ENCODE measurements at regions of chr19 and their contacts with region 1.

Region 1: GRCh38 chr19:11587302-11587974 is 9.8 kb upstream of the ZNF627 start:
- DNase-seq: peak; percentile 74 to 81
- ATAC-seq: peak; percentile 85 to 92 (median 90)
- H3K4me3 ChIP-seq: no peak overlapping the region
- H3K27ac ChIP-seq: no peak overlapping the region
- H3K4me1 ChIP-seq: no peaks in the 10 kb centered on the region
- H3K27me3 ChIP-seq: no peaks in the 10 kb centered on the region
- CTCF ChIP-seq: peak; percentile 88

Region 2: GRCh38 chr19:11125994-11126685 is 461.3 kb before region 1 on chr19:
- intact Hi-C with region 1: no loop called
- DNase-seq: peak; percentile 78 to 85
- ATAC-seq: peak; percentile 59 to 85 (median 68)
- H3K4me3 ChIP-seq: no peak overlapping the region
- H3K27ac ChIP-seq: no peak overlapping the region
- H3K4me1 ChIP-seq: no peaks in the 10 kb centered on the region
- H3K27me3 ChIP-seq: no peaks in the 10 kb centered on the region
- CTCF ChIP-seq: peak; percentile 67

Region 3: DNA sequence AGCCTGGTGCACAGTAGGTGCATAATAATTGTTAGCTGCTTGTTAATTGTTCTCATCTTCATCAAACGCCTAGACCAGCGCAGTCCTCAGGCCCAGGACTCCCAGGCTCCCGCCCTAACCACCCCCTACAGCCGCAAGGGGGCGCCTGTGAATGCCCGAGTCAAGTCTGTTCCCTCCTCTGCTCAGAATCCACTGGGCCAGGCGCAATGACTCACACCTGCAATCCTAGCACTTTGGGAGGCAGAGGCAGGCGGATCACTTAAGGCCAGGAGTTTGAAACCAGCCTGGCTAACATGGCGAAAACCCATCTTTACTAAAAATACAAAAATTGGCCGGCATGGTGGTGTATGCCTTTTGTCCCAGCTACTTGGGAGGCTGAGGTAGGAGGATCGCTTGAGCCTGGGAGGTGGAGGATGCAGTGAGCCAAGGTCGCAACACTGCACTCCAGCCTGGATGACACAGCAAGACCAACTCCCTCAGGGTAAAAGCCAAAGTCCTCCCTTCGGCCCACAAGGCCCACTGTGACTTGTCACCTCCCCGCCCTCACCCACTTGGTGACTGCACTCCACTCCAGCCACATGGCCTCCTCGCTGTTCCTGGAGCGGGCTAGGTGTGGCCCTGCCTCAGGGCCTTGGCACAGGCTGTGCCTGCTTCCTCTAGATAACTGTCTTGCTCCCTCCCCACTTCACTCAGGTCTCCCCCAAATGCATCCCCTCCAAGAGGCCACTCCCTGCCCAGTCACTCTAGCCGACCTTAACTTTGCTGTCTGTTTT is 90.9 kb before region 1 on chr19:
- intact Hi-C with region 1: loop called in 1 of 2 experiments (anchors 5 kb)
- DNase-seq: peak; percentile 70 to 84
- ATAC-seq: peak; percentile 52 to 82 (median 72)
- H3K4me3 ChIP-seq: no peak overlapping the region
- H3K27ac ChIP-seq: no peak overlapping the region
- H3K4me1 ChIP-seq: no peaks in the 10 kb centered on the region
- H3K27me3 ChIP-seq: no peaks in the 10 kb centered on the region
- CTCF ChIP-seq: peak; percentile 50

Measured in psoas muscle (tissue), 8 donors.